ENCODE measurements at regions of chr1 and their contacts with region 1.

Region 1: DNA sequence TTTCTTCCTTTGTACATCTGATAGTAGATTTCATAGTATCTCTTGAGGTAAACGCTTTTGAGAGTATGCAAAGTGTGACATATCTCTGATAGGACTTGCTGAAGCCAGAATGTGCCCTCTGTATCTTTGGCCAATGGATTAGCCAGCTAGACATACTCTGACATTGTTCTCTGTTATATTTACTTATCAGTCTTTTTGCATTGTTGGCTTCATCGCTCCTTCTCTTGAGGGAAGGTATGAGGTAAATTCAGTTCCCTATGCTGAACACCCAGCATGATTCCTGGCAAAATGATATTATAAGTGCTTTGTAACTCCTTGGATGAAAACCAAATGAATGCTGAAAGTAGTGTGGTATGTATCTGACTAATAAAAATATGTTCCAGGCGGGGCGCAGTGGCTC is 163.2 kb upstream of the CACYBP start:
- DNase-seq: no peak
- ATAC-seq: no peak
- H3K4me3 ChIP-seq: no peak overlapping the region
- H3K27ac ChIP-seq: no peak overlapping the region
- H3K4me1 ChIP-seq: no peaks in the 10 kb centered on the region
- H3K27me3 ChIP-seq: no peaks in the 10 kb centered on the region
- CTCF ChIP-seq: no peak
- EP300 ChIP-seq: no peak
- POLR2A ChIP-seq: no peak
- RAD21 ChIP-seq: no peak

Region 2: DNA sequence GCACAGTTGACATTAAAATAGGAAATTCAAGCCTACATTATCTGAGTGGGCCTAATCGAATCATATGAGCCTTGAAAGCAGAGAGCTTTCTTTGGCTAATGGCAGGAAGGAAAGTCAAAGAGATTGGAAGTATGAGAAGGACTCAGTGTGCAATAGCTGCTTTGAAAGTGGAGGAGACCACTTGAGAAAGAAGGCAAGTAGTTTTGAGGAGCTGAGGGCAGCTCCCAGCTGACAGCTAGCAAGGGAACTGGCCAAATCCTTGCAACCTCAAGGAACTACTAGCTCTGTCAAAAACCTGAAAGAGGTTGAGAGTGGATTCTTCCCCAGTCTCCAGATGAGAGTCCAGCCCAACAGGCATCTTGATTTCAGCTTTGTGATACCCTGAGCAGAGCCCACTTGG is 14.2 kb after region 1 on chr1:
- CTCF ChIA-PET with region 1: no interaction called
- POLR2A ChIA-PET with region 1: interaction called, 4 read pairs
- in situ Hi-C with region 1: no loop called
- intact Hi-C with region 1: loop called (anchors 2 kb)
- DNase-seq: no peak
- ATAC-seq: no peak
- H3K4me3 ChIP-seq: no peak overlapping the region
- H3K27ac ChIP-seq: no peak overlapping the region
- H3K4me1 ChIP-seq: no peaks in the 10 kb centered on the region; a peak in 1 of 5 replicates
- H3K27me3 ChIP-seq: no peaks in the 10 kb centered on the region
- CTCF ChIP-seq: no peak
- EP300 ChIP-seq: no peak
- POLR2A ChIP-seq: no peak
- RAD21 ChIP-seq: no peak